Body of pancreas (tissue), 4 donors: ENCODE measurements at regions of chr1 and their contacts with region 1.

Region 1: GRCh38 chr1:204128964-204129896 is 22.6 kb downstream of the ETNK2 start:
- DNase-seq: peak; percentile 75 to 82 (median 76)
- ATAC-seq: peak; percentile 72
- H3K4me3 ChIP-seq: no peak overlapping the region
- H3K27ac ChIP-seq: peak overlapping the region; percentile 88 to 93 (median 92)
- H3K4me1 ChIP-seq: peaks cover 52% of the 10 kb centered on the region
- H3K27me3 ChIP-seq: no peaks in the 10 kb centered on the region
- CTCF ChIP-seq: peak; percentile 86 to 96 (median 92)
- POLR2A ChIP-seq: peak in 2 of 3 donors; percentile 33 to 44

Region 2: GRCh38 chr1:204072931-204073836 is 56.0 kb before region 1 on chr1 and contains the start of gene SOX13:
- intact Hi-C with region 1: loop called (anchors 5 kb)
- DNase-seq: peak; percentile 84 to 91 (median 88)
- ATAC-seq: peak; percentile 83
- H3K4me3 ChIP-seq: peak within 1 kb of the TSS; percentile 58 to 86
- H3K27ac ChIP-seq: peak within 1 kb of the TSS; percentile 49 to 92 (median 88)
- H3K4me1 ChIP-seq: peaks cover 36% of the 10 kb centered on the region
- H3K27me3 ChIP-seq: no peaks in the 10 kb centered on the region
- CTCF ChIP-seq: peak in 3 of 7 experiments; percentile 33 to 43 (median 40)
- POLR2A ChIP-seq: peak; percentile 83 to 92 (median 89)
- total RNA-seq, gene SOX13: 29.6 to 37.2 TPM

Region 3: GRCh38 chr1:204296431-204296988 is 167.3 kb after region 1 on chr1:
- intact Hi-C with region 1: no loop called
- DNase-seq: no peak
- ATAC-seq: no peak
- H3K4me3 ChIP-seq: no peak overlapping the region
- H3K27ac ChIP-seq: no peak overlapping the region
- H3K4me1 ChIP-seq: peaks cover 14% of the 10 kb centered on the region
- H3K27me3 ChIP-seq: no peaks in the 10 kb centered on the region
- CTCF ChIP-seq: no peak
- POLR2A ChIP-seq: no peak